GM12878 (cell line): ENCODE measurements at regions of chr11 and their contacts with region 1.

Region 1: GRCh38 chr11:64304316-64305072 is 830 bp upstream of the ESRRA start:
- DNase-seq: peak; percentile 78
- ATAC-seq: peak; percentile 72
- H3K4me3 ChIP-seq: peak overlapping the region; percentile 72
- H3K27ac ChIP-seq: peak overlapping the region; percentile 90
- H3K4me1 ChIP-seq: peaks cover 27% of the 10 kb centered on the region
- H3K27me3 ChIP-seq: peaks cover 5 to 13% of the 10 kb centered on the region in 2 experiments; a peak in 3 of 4 replicates
- CTCF ChIP-seq: peak; percentile 89 to 94 (median 93); a peak in 5 of 6 replicates
- EP300 ChIP-seq: no peak
- POLR2A ChIP-seq: 0 out of 2 replicates have a peak, but pooled peaks have one; percentile 57
- RAD21 ChIP-seq: peak; percentile 41

Region 2: GRCh38 chr11:64240394-64241174 is 63.9 kb before region 1 on chr11 and contains the start of gene FKBP2:
- CTCF ChIA-PET with region 1: interaction called, 19 read pairs
- POLR2A ChIA-PET with region 1: interaction called, 7 read pairs
- RAD21 ChIA-PET with region 1: interaction called, 10 read pairs
- SMC1A ChIA-PET with region 1: interaction called, 3 read pairs
- in situ Hi-C with region 1: no loop called
- intact Hi-C with region 1: loop called (anchors 2 kb)
- DNase-seq: peak; percentile 87
- ATAC-seq: peak; percentile 70
- H3K4me3 ChIP-seq: peak within 1 kb of the TSS; percentile 89
- H3K27ac ChIP-seq: peak within 1 kb of the TSS; percentile 92
- H3K4me1 ChIP-seq: peaks cover 42% of the 10 kb centered on the region
- H3K27me3 ChIP-seq: no peaks in the 10 kb centered on the region
- CTCF ChIP-seq: no peak
- EP300 ChIP-seq: no peak; a peak in 1 of 4 replicates
- POLR2A ChIP-seq: peak; percentile 94
- RAD21 ChIP-seq: no peak
- polyA plus RNA-seq, gene FKBP2: 1.8 to 26.8 TPM

Region 3: GRCh38 chr11:64269380-64270234 is 34.9 kb before region 1 on chr11:
- CTCF ChIA-PET with region 1: interaction called, 147 read pairs
- POLR2A ChIA-PET with region 1: interaction called, 61 read pairs
- RAD21 ChIA-PET with region 1: interaction called, 34 read pairs
- SMC1A ChIA-PET with region 1: interaction called, 41 read pairs
- in situ Hi-C with region 1: no loop called
- intact Hi-C with region 1: loop called (anchors 1 kb)
- DNase-seq: peak; percentile 98
- ATAC-seq: peak; percentile 86
- H3K4me3 ChIP-seq: peak overlapping the region; percentile 96
- H3K27ac ChIP-seq: peak overlapping the region; percentile 81
- H3K4me1 ChIP-seq: peaks cover 12% of the 10 kb centered on the region
- H3K27me3 ChIP-seq: no peaks in the 10 kb centered on the region
- CTCF ChIP-seq: peak in 1 of 3 experiments; percentile 32; a peak in 2 of 6 replicates
- EP300 ChIP-seq: no peak
- POLR2A ChIP-seq: peak; percentile 77
- RAD21 ChIP-seq: no peak

Region 4: GRCh38 chr11:64284048-64284961 is 20.2 kb before region 1 on chr11 and contains the start of gene BAD:
- CTCF ChIA-PET with region 1: interaction called, 46 read pairs
- POLR2A ChIA-PET with region 1: interaction called, 14 read pairs
- RAD21 ChIA-PET with region 1: interaction called, 10 read pairs
- SMC1A ChIA-PET with region 1: interaction called, 7 read pairs
- in situ Hi-C with region 1: no loop called
- intact Hi-C with region 1: no loop called
- DNase-seq: no peak
- ATAC-seq: peak; percentile 94
- H3K4me3 ChIP-seq: peak within 1 kb of the TSS; percentile 86
- H3K27ac ChIP-seq: peak within 1 kb of the TSS; percentile 91
- H3K4me1 ChIP-seq: peaks cover 7% of the 10 kb centered on the region
- H3K27me3 ChIP-seq: no peaks in the 10 kb centered on the region
- CTCF ChIP-seq: no peak
- EP300 ChIP-seq: no peak; a peak in 1 of 4 replicates
- POLR2A ChIP-seq: peak; percentile 78
- RAD21 ChIP-seq: no peak
- polyA plus RNA-seq, gene BAD: 1.5 to 7.4 TPM

Region 5: GRCh38 chr11:64317957-64318693 is 13.6 kb after region 1 on chr11 and contains the start of gene PRDX5:
- CTCF ChIA-PET with region 1: interaction called, 49 read pairs
- POLR2A ChIA-PET with region 1: interaction called, 42 read pairs
- RAD21 ChIA-PET with region 1: interaction called, 30 read pairs
- SMC1A ChIA-PET with region 1: interaction called, 16 read pairs
- in situ Hi-C with region 1: no loop called
- intact Hi-C with region 1: loop called (anchors 1 kb)
- DNase-seq: peak; percentile 92
- ATAC-seq: peak; percentile 86
- H3K4me3 ChIP-seq: peak within 1 kb of the TSS; percentile 80
- H3K27ac ChIP-seq: peak within 1 kb of the TSS; percentile 99
- H3K4me1 ChIP-seq: peaks cover 9% of the 10 kb centered on the region
- H3K27me3 ChIP-seq: no peaks in the 10 kb centered on the region
- CTCF ChIP-seq: peak; percentile 41 to 91 (median 41); a peak in 5 of 6 replicates
- EP300 ChIP-seq: no peak
- POLR2A ChIP-seq: peak; percentile 86
- RAD21 ChIP-seq: peak; percentile 56; the same call in 1 of the 2 replicates
- polyA plus RNA-seq, gene PRDX5: 95.7 to 203 TPM

Region 6: GRCh38 chr11:64341851-64342791 is 37.6 kb after region 1 on chr11:
- CTCF ChIA-PET with region 1: interaction called, 10 read pairs
- POLR2A ChIA-PET with region 1: interaction called, 5 read pairs
- RAD21 ChIA-PET with region 1: interaction called, 3 read pairs
- SMC1A ChIA-PET with region 1: interaction called, 3 read pairs
- in situ Hi-C with region 1: no loop called
- intact Hi-C with region 1: loop called (anchors 1 kb)
- DNase-seq: no peak
- ATAC-seq: peak; percentile 78
- H3K4me3 ChIP-seq: peak overlapping the region; percentile 45; the same call in 1 of the 2 replicates
- H3K27ac ChIP-seq: no peak overlapping the region
- H3K4me1 ChIP-seq: peaks cover 24% of the 10 kb centered on the region
- H3K27me3 ChIP-seq: no peaks in the 10 kb centered on the region
- CTCF ChIP-seq: peak; percentile 21 to 31 (median 29); a peak in 3 of 6 replicates
- EP300 ChIP-seq: no peak
- POLR2A ChIP-seq: peak; percentile 47; the same call in 1 of the 2 replicates
- RAD21 ChIP-seq: peak; percentile 23; the same call in 1 of the 2 replicates

Region 7: GRCh38 chr11:64500176-64501013 is 195.9 kb after region 1 on chr11:
- CTCF ChIA-PET with region 1: no interaction called
- POLR2A ChIA-PET with region 1: no interaction called
- RAD21 ChIA-PET with region 1: no interaction called
- SMC1A ChIA-PET with region 1: no interaction called
- in situ Hi-C with region 1: no loop called
- intact Hi-C with region 1: no loop called
- DNase-seq: no peak
- ATAC-seq: no peak
- H3K4me3 ChIP-seq: no peak overlapping the region
- H3K27ac ChIP-seq: no peak overlapping the region
- H3K4me1 ChIP-seq: no peaks in the 10 kb centered on the region
- H3K27me3 ChIP-seq: no peaks in the 10 kb centered on the region
- CTCF ChIP-seq: no peak
- EP300 ChIP-seq: no peak
- POLR2A ChIP-seq: no peak
- RAD21 ChIP-seq: no peak

Region 8: DNA sequence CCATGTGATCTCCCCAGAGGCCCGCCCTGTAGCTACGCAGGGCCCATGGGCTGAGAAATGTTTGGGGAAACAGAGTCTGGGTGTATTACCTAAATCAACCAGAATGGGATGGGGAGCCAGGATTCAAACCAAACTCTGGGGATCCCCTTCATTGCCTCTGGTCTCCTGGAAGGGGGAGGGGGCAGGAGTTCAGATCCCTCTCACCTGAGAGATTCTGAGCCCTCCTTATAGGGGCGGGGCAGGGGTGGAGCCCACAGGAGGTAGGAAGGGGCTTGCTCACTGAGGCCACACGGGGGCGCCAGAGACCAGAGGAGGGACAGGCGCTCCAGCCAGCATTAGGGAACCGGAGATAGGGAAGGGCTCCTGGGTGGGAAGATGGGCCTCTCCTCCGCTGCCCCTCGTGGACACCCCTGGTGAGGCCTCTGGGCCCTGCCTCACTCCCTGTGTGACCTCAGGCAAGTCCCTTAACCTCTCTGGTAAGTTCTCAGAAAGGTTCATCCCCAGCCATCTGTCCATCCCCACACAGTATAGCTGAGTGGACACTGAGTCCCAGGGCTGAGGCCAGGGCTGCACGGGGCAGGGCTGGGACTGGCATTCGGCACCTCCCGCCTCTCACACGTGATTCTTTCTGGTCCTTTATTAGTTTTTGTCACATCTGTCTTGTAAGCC is 542.6 kb after region 1 on chr11:
- CTCF ChIA-PET with region 1: no interaction called
- POLR2A ChIA-PET with region 1: no interaction called
- RAD21 ChIA-PET with region 1: no interaction called
- SMC1A ChIA-PET with region 1: no interaction called
- in situ Hi-C with region 1: no loop called
- intact Hi-C with region 1: no loop called
- DNase-seq: no peak
- ATAC-seq: peak; percentile 61
- H3K4me3 ChIP-seq: no peak overlapping the region
- H3K27ac ChIP-seq: no peak overlapping the region
- H3K4me1 ChIP-seq: peaks cover 55% of the 10 kb centered on the region
- H3K27me3 ChIP-seq: no peaks in the 10 kb centered on the region
- CTCF ChIP-seq: peak; percentile 86 to 97 (median 96)
- EP300 ChIP-seq: no peak
- POLR2A ChIP-seq: peak; percentile 36; the same call in 1 of the 2 replicates
- RAD21 ChIP-seq: peak; percentile 90